ENCODE measurements at regions of chr1 and their contacts with region 1.

Region 1: GRCh38 chr1:31705080-31705866 is 1.5 kb upstream of the COL16A1 start:
- DNase-seq: peak; percentile 92
- ATAC-seq: peak; percentile 87
- H3K4me3 Mint-ChIP-seq: peak overlapping the region; percentile 31
- H3K27ac Mint-ChIP-seq: peak overlapping the region; percentile 61
- H3K4me1 Mint-ChIP-seq: peaks cover 51% of the 10 kb centered on the region
- H3K27me3 Mint-ChIP-seq: peaks cover 44% of the 10 kb centered on the region

Region 2: GRCh38 chr1:31624309-31624708 is 81.0 kb before region 1 on chr1:
- CTCF ChIA-PET with region 1: no interaction called
- DNase-seq: no peak
- ATAC-seq: peak; percentile 43
- H3K4me3 Mint-ChIP-seq: no peak overlapping the region
- H3K27ac Mint-ChIP-seq: peak overlapping the region; percentile 53
- H3K4me1 Mint-ChIP-seq: peaks cover 18% of the 10 kb centered on the region
- H3K27me3 Mint-ChIP-seq: no peaks in the 10 kb centered on the region

Region 3: GRCh38 chr1:31663622-31664452 is 41.4 kb before region 1 on chr1:
- CTCF ChIA-PET with region 1: interaction called, 14 read pairs
- DNase-seq: peak; percentile 68
- ATAC-seq: peak; percentile 40
- H3K4me3 Mint-ChIP-seq: no peak overlapping the region
- H3K27ac Mint-ChIP-seq: no peak overlapping the region
- H3K4me1 Mint-ChIP-seq: no peaks in the 10 kb centered on the region
- H3K27me3 Mint-ChIP-seq: peaks cover 10% of the 10 kb centered on the region

Region 4: GRCh38 chr1:31715087-31715872 is 10.0 kb after region 1 on chr1:
- CTCF ChIA-PET with region 1: interaction called, 43 read pairs
- DNase-seq: peak; percentile 54
- ATAC-seq: peak; percentile 71
- H3K4me3 Mint-ChIP-seq: peak overlapping the region; percentile 48
- H3K27ac Mint-ChIP-seq: no peak overlapping the region
- H3K4me1 Mint-ChIP-seq: peaks cover 11% of the 10 kb centered on the region
- H3K27me3 Mint-ChIP-seq: peaks cover 73% of the 10 kb centered on the region

Region 5: GRCh38 chr1:31736671-31737070 is 31.4 kb after region 1 on chr1:
- CTCF ChIA-PET with region 1: no interaction called
- DNase-seq: no peak
- ATAC-seq: no peak
- H3K4me3 Mint-ChIP-seq: no peak overlapping the region
- H3K27ac Mint-ChIP-seq: no peak overlapping the region
- H3K4me1 Mint-ChIP-seq: peaks cover 5% of the 10 kb centered on the region
- H3K27me3 Mint-ChIP-seq: no peaks in the 10 kb centered on the region